ENCODE measurements at regions of chr13 and their contacts with region 1.

Region 1: DNA sequence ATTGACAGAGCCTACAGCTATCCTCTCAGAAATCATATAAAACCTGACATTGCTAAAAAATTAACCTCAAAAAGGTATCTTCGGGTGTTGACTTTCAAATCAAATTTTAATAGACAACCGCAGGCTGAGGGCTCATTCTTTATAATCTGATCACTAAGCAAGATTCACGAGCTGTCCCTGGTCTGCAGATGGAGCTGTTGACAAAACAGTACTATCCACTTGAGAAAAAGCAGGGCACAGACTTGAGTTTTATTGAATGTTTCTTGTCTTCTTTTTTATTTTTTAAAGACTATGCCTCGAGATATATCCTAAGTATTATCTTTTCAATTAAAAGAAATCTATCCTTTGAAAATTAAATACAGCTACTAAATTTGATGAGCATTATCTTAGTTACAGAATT is 540.5 kb downstream of the PCDH9 start:
- DNase-seq: peak; percentile 18
- ATAC-seq: no peak
- H3K4me3 ChIP-seq: no peak overlapping the region
- H3K4me3 Mint-ChIP-seq: no peak overlapping the region
- H3K27ac ChIP-seq: no peak overlapping the region
- H3K27ac Mint-ChIP-seq: no peak overlapping the region
- H3K4me1 ChIP-seq: peaks cover 0 to 6% of the 10 kb centered on the region in 2 donors
- H3K4me1 Mint-ChIP-seq: peaks cover 11% of the 10 kb centered on the region
- H3K27me3 ChIP-seq: no peaks in the 10 kb centered on the region
- H3K27me3 Mint-ChIP-seq: no peaks in the 10 kb centered on the region
- CTCF ChIP-seq: no peak

Region 2: DNA sequence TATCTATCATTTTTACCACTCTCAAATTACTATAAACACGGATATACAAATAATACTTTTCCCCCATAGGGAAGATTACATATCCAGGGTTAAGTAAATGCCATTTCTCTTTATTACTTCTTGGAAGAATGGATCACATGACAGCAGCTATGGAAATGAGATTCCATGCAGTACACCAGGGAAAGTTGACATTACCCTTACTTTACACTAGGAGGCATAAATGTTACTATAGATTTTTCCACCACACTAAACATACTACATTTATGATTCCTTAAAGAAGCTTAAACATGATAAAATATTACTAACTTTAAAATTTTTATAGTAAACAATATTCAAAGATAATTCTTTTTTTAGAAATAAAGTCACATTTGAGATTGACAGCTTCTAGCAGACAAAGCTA is 70.9 kb before region 1 on chr13:
- CTCF ChIA-PET with region 1: interaction called, 27 read pairs
- POLR2A ChIA-PET with region 1: no interaction called
- intact Hi-C with region 1: loop called (anchors 1 kb)
- DNase-seq: peak; percentile 18
- ATAC-seq: no peak
- H3K4me3 ChIP-seq: no peak overlapping the region
- H3K4me3 Mint-ChIP-seq: no peak overlapping the region
- H3K27ac ChIP-seq: no peak overlapping the region
- H3K27ac Mint-ChIP-seq: no peak overlapping the region
- H3K4me1 ChIP-seq: no peaks in the 10 kb centered on the region
- H3K4me1 Mint-ChIP-seq: no peaks in the 10 kb centered on the region
- H3K27me3 ChIP-seq: no peaks in the 10 kb centered on the region
- H3K27me3 Mint-ChIP-seq: no peaks in the 10 kb centered on the region
- CTCF ChIP-seq: peak; percentile 64

Region 3: GRCh38 chr13:66700059-66700690 is 10.5 kb after region 1 on chr13:
- CTCF ChIA-PET with region 1: no interaction called
- POLR2A ChIA-PET with region 1: no interaction called
- intact Hi-C with region 1: no loop called
- DNase-seq: no peak
- ATAC-seq: no peak
- H3K4me3 ChIP-seq: no peak overlapping the region
- H3K4me3 Mint-ChIP-seq: no peak overlapping the region
- H3K27ac ChIP-seq: no peak overlapping the region
- H3K27ac Mint-ChIP-seq: no peak overlapping the region
- H3K4me1 ChIP-seq: no peaks in the 10 kb centered on the region
- H3K4me1 Mint-ChIP-seq: no peaks in the 10 kb centered on the region
- H3K27me3 ChIP-seq: no peaks in the 10 kb centered on the region
- H3K27me3 Mint-ChIP-seq: no peaks in the 10 kb centered on the region
- CTCF ChIP-seq: no peak

Region 4: DNA sequence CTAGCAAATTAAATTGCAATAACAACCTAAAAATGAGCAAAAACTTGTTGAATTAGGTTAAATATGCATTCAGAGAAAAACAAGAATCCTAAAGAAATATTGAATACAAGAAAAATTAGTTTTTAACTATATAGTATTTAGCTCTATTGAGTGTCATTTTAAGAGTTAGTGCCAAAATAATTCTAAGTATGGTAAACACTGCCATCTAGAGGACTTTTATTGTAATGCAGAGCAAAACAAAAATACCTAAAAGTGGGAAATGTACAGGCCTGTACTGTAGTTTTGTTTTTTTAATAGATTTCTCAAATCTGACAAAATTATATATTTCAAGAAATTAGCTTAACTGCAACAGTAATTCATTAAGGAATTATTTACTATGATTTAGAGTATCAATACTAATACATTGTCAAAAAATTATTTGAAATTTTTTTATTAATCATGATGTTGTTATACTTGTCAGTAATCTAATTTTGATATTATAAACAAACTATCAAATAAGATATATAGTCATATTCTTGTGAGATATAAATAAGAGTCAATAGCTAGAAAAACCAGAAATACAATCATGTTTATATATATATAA is 548.7 kb after region 1 on chr13:
- CTCF ChIA-PET with region 1: interaction called, 10 read pairs
- POLR2A ChIA-PET with region 1: no interaction called
- intact Hi-C with region 1: no loop called
- DNase-seq: peak; percentile 59
- ATAC-seq: peak; percentile 47
- H3K4me3 ChIP-seq: no peak overlapping the region
- H3K4me3 Mint-ChIP-seq: no peak overlapping the region
- H3K27ac ChIP-seq: no peak overlapping the region
- H3K27ac Mint-ChIP-seq: no peak overlapping the region
- H3K4me1 ChIP-seq: no peaks in the 10 kb centered on the region
- H3K4me1 Mint-ChIP-seq: no peaks in the 10 kb centered on the region
- H3K27me3 ChIP-seq: no peaks in the 10 kb centered on the region
- H3K27me3 Mint-ChIP-seq: no peaks in the 10 kb centered on the region
- CTCF ChIP-seq: peak; percentile 97

Measured in B cell (primary cell).